ENCODE measurements at regions of chr2 and their contacts with region 1.

Region 1: GRCh38 chr2:215917953-215918620 is 95.3 kb downstream of the MREG start:
- DNase-seq: no peak
- ATAC-seq: peak; percentile 43
- H3K4me3 ChIP-seq: no peak overlapping the region
- H3K27ac ChIP-seq: peak overlapping the region; percentile 43 to 53
- H3K4me1 ChIP-seq: peaks cover 3 to 20% of the 10 kb centered on the region in 2 donors
- H3K27me3 ChIP-seq: no peaks in the 10 kb centered on the region
- CTCF ChIP-seq: no peak

Region 2: DNA sequence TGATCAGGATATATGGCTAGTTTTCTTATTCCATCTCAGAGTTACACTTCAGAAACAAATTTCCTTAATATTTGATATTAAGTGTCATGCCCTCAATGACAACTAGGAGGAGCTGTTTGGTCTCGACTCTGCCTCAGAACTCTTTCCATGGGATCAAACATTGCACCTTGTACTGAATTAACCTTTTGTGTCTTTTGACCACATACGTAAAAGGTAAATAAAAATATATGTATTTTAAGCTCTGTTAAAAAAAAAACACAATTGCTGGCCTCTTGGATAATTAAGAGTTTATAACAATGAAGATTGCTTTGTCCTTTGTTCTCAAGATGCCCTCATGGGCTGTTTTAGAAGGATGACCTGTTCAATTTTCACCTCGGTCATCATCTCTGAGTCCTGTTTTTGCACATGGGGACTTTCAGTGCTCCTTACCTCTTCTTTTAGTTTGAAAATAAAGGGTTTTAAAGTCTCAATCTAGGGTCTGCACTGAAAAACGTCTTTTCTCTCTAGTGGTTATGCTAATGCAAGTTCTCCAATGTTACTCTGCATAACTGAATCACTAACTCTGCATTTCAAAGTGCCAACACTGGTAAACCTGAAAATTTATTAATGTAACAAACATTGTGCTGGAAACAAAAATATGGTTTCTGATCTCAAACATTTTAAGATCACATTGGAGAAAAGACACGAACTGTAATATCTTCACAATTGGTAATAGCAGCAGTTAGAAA is 463.4 kb before region 1 on chr2:
- intact Hi-C with region 1: loop called in 1 of 2 experiments (anchors 10 kb)
- DNase-seq: no peak
- ATAC-seq: peak; percentile 87
- H3K4me3 ChIP-seq: no peak overlapping the region
- H3K27ac ChIP-seq: no peak overlapping the region
- H3K4me1 ChIP-seq: no peaks in the 10 kb centered on the region
- H3K27me3 ChIP-seq: no peaks in the 10 kb centered on the region
- CTCF ChIP-seq: peak; percentile 59 to 61

Region 3: GRCh38 chr2:215460682-215461382 is 457.3 kb before region 1 on chr2:
- intact Hi-C with region 1: loop called (anchors 10 kb)
- DNase-seq: no peak
- ATAC-seq: peak; percentile 76
- H3K4me3 ChIP-seq: no peak overlapping the region
- H3K27ac ChIP-seq: peak overlapping the region in 1 of 2 donors; percentile 28
- H3K4me1 ChIP-seq: no peaks in the 10 kb centered on the region
- H3K27me3 ChIP-seq: no peaks in the 10 kb centered on the region
- CTCF ChIP-seq: no peak

Measured in left lung (tissue), 14 donors.